ENCODE measurements at regions of chr3 and their contacts with region 1.

Region 1: DNA sequence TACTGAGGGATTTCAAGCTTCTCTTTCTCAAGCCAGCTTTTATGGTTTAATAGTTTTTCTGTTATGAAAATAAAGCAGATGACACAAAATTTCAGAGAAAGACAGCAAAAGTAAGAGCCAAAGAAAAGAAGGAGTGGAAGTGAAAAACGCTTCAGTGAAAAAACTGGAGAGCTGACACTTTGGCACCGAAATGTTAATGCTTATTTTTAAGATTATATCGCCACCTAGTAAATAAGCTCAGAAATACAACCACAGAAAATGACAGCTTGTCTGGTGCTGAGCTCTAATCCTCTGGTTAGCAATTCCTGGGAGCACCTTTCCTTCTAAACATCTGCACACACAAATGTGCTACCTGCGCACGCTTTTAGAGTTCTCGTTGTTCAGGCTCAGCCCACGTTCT is 101.6 kb downstream of the ZPLD1 start:
- DNase-seq: peak; percentile 25
- ATAC-seq: peak; percentile 84
- H3K4me3 ChIP-seq: no peak overlapping the region
- H3K27ac ChIP-seq: no peak overlapping the region
- H3K4me1 ChIP-seq: no peaks in the 10 kb centered on the region
- H3K27me3 ChIP-seq: no peaks in the 10 kb centered on the region
- CTCF ChIP-seq: peak; percentile 69

Region 2: GRCh38 chr3:101803173-101803782 is 733.2 kb before region 1 on chr3:
- CTCF ChIA-PET with region 1: no interaction called
- POLR2A ChIA-PET with region 1: no interaction called
- in situ Hi-C with region 1: loop called (anchors 25 kb)
- intact Hi-C with region 1: loop called (anchors 5 kb)
- DNase-seq: no peak
- ATAC-seq: peak; percentile 99
- H3K4me3 ChIP-seq: no peak overlapping the region
- H3K27ac ChIP-seq: no peak overlapping the region
- H3K4me1 ChIP-seq: no peaks in the 10 kb centered on the region
- H3K27me3 ChIP-seq: no peaks in the 10 kb centered on the region
- CTCF ChIP-seq: peak; percentile 89

Region 3: GRCh38 chr3:102235679-102236078 is 300.8 kb before region 1 on chr3:
- CTCF ChIA-PET with region 1: interaction called, 17 read pairs
- POLR2A ChIA-PET with region 1: no interaction called
- in situ Hi-C with region 1: loop called (anchors 25 kb)
- intact Hi-C with region 1: loop called (anchors 1 kb)
- DNase-seq: no peak
- ATAC-seq: peak; percentile 75
- H3K4me3 ChIP-seq: no peak overlapping the region
- H3K27ac ChIP-seq: no peak overlapping the region
- H3K4me1 ChIP-seq: no peaks in the 10 kb centered on the region
- H3K27me3 ChIP-seq: peaks cover 2% of the 10 kb centered on the region; the same call in 1 of the 2 replicates
- CTCF ChIP-seq: peak; percentile 79

Region 4: GRCh38 chr3:102818982-102819381 is 282.5 kb after region 1 on chr3:
- CTCF ChIA-PET with region 1: no interaction called
- POLR2A ChIA-PET with region 1: no interaction called
- in situ Hi-C with region 1: no loop called
- intact Hi-C with region 1: no loop called
- DNase-seq: no peak
- ATAC-seq: no peak
- H3K4me3 ChIP-seq: no peak overlapping the region
- H3K27ac ChIP-seq: no peak overlapping the region
- H3K4me1 ChIP-seq: no peaks in the 10 kb centered on the region
- H3K27me3 ChIP-seq: no peaks in the 10 kb centered on the region
- CTCF ChIP-seq: no peak